Testis (tissue), 5 donors: ENCODE measurements at regions of chr1 and their contacts with region 1.

Region 1: GRCh38 chr1:20696397-20697329 is 21.1 kb downstream of the KIF17 start:
- DNase-seq: peak; percentile 93
- H3K4me3 ChIP-seq: peak overlapping the region; percentile 53 to 60
- H3K27ac ChIP-seq: peak overlapping the region; percentile 85 to 89
- H3K4me1 ChIP-seq: peaks cover 5% of the 10 kb centered on the region
- H3K27me3 ChIP-seq: no peaks in the 10 kb centered on the region
- CTCF ChIP-seq: peak; percentile 88 to 93 (median 89)
- POLR2A ChIP-seq: no peak

Region 2: DNA sequence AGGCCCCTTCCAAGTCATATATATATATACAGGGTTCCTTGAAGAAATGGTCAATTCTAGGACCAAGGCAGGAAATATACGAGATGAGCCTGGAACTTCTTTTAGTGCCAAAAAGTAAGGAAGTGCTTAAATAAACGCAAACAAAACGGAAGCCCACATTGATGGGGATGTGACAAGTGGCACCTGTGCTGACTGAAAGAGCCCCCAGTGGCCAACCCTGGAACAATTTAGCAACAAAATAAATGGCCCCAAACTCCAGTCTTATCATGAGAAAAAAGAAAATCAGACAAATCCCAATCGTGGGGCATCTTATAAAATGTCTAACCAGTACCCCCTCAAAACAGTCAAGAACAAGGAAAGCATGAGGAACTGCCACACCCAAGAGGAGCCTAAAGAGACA is 609.0 kb before region 1 on chr1:
- intact Hi-C with region 1: no loop called
- DNase-seq: no peak
- H3K4me3 ChIP-seq: no peak overlapping the region
- H3K27ac ChIP-seq: no peak overlapping the region
- H3K4me1 ChIP-seq: no peaks in the 10 kb centered on the region
- H3K27me3 ChIP-seq: no peaks in the 10 kb centered on the region
- CTCF ChIP-seq: peak in 1 of 3 experiments; percentile 27
- POLR2A ChIP-seq: no peak

Region 3: DNA sequence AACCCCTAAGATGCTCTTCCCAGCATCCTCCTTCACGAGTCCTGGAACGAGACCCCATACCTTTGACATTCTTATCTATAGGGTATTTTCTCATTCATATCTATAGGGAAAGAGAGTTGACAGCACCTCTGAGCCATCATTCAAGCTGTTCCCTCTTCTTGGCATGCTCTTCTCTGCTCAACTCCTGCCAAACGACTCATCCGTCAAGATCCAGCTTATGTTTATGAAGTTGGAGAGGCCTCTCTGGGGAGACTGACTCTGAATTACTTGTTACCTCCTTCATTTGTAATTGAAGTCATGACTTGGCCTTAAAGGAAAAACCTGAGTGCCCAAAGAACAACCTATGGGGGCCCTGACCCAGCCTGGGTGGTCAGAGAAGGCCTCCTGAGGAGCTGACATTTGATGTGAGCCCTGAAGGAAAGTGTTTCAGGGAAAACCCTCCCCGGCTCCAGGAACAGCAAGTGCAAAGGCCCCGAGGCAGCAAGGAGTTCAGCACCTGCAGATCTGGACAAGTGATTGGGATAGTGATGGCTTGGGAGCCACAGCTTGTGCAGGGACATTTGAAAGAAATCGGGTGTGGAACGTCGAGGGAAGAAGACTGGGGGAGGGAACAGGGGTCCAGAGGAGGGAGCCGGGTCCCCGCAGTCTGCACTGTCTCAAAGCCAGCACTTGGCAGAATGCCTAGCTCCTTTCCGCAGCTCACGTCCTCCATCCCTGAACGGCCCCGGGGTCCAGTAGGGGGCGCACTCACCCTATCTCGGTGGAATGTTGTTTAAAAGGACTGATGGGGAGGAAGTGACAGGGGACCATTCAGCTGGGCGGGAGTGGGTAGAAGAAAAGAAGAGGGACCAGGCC is 121.8 kb before region 1 on chr1:
- intact Hi-C with region 1: no loop called
- DNase-seq: peak; percentile 72
- H3K4me3 ChIP-seq: no peak overlapping the region
- H3K27ac ChIP-seq: no peak overlapping the region
- H3K4me1 ChIP-seq: no peaks in the 10 kb centered on the region
- H3K27me3 ChIP-seq: no peaks in the 10 kb centered on the region
- CTCF ChIP-seq: peak in 2 of 3 experiments; percentile 29 to 43
- POLR2A ChIP-seq: no peak

Region 4: DNA sequence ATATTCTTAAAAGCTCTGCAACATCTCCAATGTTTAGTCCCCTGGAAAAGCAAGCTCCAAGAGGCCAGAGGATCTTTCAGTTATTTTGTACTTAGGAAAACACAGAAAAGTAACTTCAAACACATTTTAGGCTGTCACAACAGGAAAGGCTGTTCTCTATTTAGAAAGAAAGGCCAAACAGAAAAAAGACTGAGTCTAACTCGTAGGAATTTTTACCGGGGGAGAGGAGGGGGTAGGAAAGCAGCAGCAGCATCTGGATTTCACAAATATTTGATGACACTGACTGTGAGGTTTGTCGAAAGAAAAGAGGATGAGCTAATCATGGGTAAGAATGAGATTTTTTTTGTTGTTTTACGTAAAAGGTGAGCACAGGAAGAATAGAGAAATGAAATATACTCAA is 372.9 kb after region 1 on chr1:
- intact Hi-C with region 1: no loop called
- DNase-seq: no peak
- H3K4me3 ChIP-seq: no peak overlapping the region
- H3K27ac ChIP-seq: no peak overlapping the region
- H3K4me1 ChIP-seq: no peaks in the 10 kb centered on the region
- H3K27me3 ChIP-seq: no peaks in the 10 kb centered on the region
- CTCF ChIP-seq: no peak
- POLR2A ChIP-seq: no peak

Region 5: GRCh38 chr1:21189906-21190500 is 493.3 kb after region 1 on chr1:
- intact Hi-C with region 1: loop called (anchors 10 kb)
- DNase-seq: no peak
- H3K4me3 ChIP-seq: no peak overlapping the region
- H3K27ac ChIP-seq: no peak overlapping the region
- H3K4me1 ChIP-seq: no peaks in the 10 kb centered on the region
- H3K27me3 ChIP-seq: no peaks in the 10 kb centered on the region
- CTCF ChIP-seq: no peak
- POLR2A ChIP-seq: no peak